ENCODE measurements at regions of chr11 and their contacts with region 1.

Region 1: GRCh38 chr11:90100431-90100830 is 14.7 kb downstream of the UBTFL1 start:
- DNase-seq: no peak
- H3K4me3 ChIP-seq: no peak overlapping the region
- H3K27ac ChIP-seq: no peak overlapping the region
- H3K4me1 ChIP-seq: no peaks in the 10 kb centered on the region
- H3K27me3 ChIP-seq: no peaks in the 10 kb centered on the region
- CTCF ChIP-seq: no peak

Region 2: GRCh38 chr11:90113541-90113940 is 13.1 kb after region 1 on chr11:
- CTCF ChIA-PET with region 1: no interaction called
- POLR2A ChIA-PET with region 1: interaction called, 12 read pairs
- intact Hi-C with region 1: no loop called
- DNase-seq: no peak
- H3K4me3 ChIP-seq: no peak overlapping the region
- H3K27ac ChIP-seq: no peak overlapping the region
- H3K4me1 ChIP-seq: no peaks in the 10 kb centered on the region
- H3K27me3 ChIP-seq: no peaks in the 10 kb centered on the region
- CTCF ChIP-seq: peak; percentile 75

Region 3: DNA sequence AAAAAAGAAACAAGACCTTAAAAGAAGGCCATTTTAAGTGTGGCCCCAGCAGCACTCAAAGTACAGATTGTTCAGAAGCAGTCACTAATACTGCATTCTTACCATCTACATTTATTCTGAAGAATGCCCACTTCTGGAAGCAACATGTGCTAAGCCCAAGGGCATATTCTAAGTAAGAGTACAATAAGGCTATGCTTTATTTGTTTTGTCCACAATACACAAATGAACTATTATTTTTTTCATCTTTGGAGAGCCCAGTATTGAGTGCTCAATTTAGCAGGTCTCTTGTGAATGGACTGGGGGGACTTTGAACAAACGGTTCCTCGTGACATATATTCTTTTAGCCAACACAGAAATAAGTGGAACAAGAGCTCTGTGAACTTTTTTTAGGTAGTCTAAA is 313.8 kb after region 1 on chr11:
- CTCF ChIA-PET with region 1: no interaction called
- POLR2A ChIA-PET with region 1: no interaction called
- intact Hi-C with region 1: no loop called
- DNase-seq: no peak
- H3K4me3 ChIP-seq: no peak overlapping the region
- H3K27ac ChIP-seq: no peak overlapping the region
- H3K4me1 ChIP-seq: no peaks in the 10 kb centered on the region
- H3K27me3 ChIP-seq: no peaks in the 10 kb centered on the region
- CTCF ChIP-seq: no peak

Measured in PC-9 (cell line).